ENCODE measurements at regions of chr10 and their contacts with region 1.

Region 1: DNA sequence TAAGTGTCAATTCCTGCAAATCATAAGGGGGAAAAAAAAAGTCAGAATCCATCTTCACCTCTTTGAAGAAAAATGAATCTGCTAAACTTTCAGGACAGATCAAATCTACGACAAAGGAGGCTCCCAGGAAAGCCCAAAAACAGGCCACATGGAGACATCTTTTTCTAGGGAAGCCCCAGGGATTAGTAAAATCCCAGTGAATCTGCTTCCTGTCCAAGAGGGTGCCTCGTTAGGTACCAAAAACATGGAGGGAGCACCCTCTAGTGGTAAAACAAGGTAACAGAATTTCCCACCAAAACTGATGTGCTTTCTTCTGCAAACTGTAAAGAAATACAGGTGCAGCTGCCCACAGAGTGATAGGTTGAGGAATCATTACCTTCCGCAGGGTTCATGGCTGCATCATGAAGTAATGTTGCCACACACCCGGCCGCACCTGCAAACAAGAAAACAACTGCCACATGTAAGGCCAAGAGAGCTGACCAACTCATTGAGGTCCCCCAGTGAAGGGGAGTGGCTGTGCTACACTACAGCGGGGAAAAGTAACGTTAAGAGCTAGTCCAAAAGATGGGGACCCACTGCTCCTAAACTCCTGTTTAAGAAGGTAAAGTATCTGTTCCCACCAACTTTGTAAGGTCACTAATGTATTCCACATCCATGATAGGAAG is 7.9 kb downstream of the SLC25A28 start:
- DNase-seq: peak in 1 of 5 donors; percentile 31
- ATAC-seq: peak; percentile 40 to 77 (median 60)
- H3K4me3 ChIP-seq: no peak overlapping the region
- H3K27ac ChIP-seq: no peak overlapping the region
- H3K4me1 ChIP-seq: peaks cover 4 to 23% (median 11%) of the 10 kb centered on the region in 12 donors
- H3K27me3 ChIP-seq: no peaks in the 10 kb centered on the region
- CTCF ChIP-seq: peak; percentile 71 to 90 (median 81)
- POLR2A ChIP-seq: no peak

Region 2: DNA sequence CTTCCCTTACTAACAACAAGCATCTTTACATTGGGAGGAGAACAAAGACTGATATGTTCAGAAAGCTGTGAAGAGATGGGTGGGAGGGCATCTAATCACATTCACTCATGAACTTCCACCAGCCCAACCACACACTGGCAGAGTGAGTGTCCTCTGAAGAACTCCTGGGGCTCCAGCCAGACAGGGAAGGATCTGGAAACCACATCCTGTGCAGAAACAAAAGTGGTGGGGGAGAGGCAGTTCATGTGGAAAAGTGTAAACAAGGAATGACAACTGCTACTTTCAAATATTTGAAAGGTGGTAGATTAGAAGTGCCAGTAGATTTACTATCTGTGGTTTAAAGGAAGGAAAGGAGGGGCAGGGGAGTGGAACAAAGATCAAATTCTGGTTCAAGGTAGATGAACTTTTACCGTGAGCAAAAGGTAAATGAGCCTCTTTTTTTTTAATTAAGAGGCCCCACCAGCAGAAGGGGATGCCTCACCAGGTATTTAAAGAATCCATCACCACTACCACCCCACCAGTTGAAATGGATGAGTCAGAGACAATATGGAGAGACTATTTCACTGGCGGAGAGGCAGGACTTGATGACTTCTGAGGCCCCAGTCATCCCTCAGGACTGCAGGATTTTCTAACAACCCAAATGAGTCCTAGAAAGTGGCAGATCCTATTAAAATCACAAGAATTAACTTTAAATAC is 216.4 kb before region 1 on chr10:
- intact Hi-C with region 1: loop called (anchors 1 to 5 kb)
- DNase-seq: no peak
- ATAC-seq: peak; percentile 4 to 54 (median 22)
- H3K4me3 ChIP-seq: no peak overlapping the region
- H3K27ac ChIP-seq: peak overlapping the region in 1 of 12 donors; percentile 15
- H3K4me1 ChIP-seq: peaks cover 0 to 49% (median 14%) of the 10 kb centered on the region in 12 donors
- H3K27me3 ChIP-seq: no peaks in the 10 kb centered on the region
- CTCF ChIP-seq: no peak
- POLR2A ChIP-seq: no peak

Region 3: DNA sequence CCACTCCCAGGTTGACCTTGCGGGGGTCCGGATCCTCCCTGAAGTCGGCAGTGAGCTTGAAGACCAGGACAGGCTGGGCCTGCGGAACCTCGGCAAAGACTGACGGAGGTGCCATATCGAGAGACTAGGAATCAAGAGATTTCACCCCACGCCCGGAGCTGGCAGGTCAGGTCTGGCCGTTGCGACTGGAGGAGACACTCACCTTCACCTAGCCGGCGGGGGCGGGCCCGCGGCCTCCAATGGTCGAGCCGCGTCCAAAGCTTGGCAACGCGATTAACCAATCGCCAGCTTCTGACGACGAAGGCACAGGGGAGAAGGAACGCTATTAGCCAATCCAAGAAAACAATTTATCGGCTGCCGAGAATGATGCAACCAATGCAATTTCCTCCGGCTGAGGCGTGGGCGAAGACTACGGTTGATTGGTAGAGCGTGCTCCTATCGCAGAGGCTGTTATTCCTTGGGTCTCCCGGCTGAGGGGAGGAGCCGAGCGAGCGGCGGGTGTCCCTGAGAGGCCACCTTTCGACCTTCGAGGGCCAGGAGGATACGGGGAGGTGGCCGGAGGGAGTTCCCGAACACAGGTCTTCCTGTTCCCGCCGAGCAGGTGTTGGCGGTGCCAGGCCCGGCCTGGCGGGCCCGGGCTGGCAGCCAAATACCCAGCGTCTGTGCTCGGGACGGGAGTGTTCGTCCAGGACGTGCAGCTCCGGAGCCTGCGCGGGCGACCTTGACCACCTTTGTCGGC is 181.7 kb before region 1 on chr10 and contains the start of gene GOT1:
- intact Hi-C with region 1: loop called in 4 of 10 experiments (anchors 2 to 5 kb)
- DNase-seq: peak; percentile 94 to 98 (median 96)
- ATAC-seq: peak; percentile 95 to 97 (median 96)
- H3K4me3 ChIP-seq: peak within 1 kb of the TSS; percentile 71 to 96 (median 85)
- H3K27ac ChIP-seq: peak within 1 kb of the TSS; percentile 90 to 99 (median 97)
- H3K4me1 ChIP-seq: peaks cover 0 to 56% (median 30%) of the 10 kb centered on the region in 12 donors
- H3K27me3 ChIP-seq: no peaks in the 10 kb centered on the region
- CTCF ChIP-seq: no peak
- POLR2A ChIP-seq: peak; percentile 50 to 81
- total RNA-seq, gene GOT1: 294 to 815 (median 505) TPM

Region 4: GRCh38 chr10:99435986-99436638 is 176.2 kb before region 1 on chr10:
- intact Hi-C with region 1: loop called in 9 of 10 experiments (anchors 2 to 5 kb)
- DNase-seq: no peak
- ATAC-seq: peak in 2 of 4 donors; percentile 26 to 31
- H3K4me3 ChIP-seq: no peak overlapping the region
- H3K27ac ChIP-seq: peak overlapping the region in 1 of 12 donors; percentile 66
- H3K4me1 ChIP-seq: peaks cover 0 to 40% (median 24%) of the 10 kb centered on the region in 12 donors
- H3K27me3 ChIP-seq: no peaks in the 10 kb centered on the region
- CTCF ChIP-seq: peak; percentile 36 to 69 (median 54)
- POLR2A ChIP-seq: no peak